ENCODE measurements at regions of chr6 and their contacts with region 1.

Region 1: DNA sequence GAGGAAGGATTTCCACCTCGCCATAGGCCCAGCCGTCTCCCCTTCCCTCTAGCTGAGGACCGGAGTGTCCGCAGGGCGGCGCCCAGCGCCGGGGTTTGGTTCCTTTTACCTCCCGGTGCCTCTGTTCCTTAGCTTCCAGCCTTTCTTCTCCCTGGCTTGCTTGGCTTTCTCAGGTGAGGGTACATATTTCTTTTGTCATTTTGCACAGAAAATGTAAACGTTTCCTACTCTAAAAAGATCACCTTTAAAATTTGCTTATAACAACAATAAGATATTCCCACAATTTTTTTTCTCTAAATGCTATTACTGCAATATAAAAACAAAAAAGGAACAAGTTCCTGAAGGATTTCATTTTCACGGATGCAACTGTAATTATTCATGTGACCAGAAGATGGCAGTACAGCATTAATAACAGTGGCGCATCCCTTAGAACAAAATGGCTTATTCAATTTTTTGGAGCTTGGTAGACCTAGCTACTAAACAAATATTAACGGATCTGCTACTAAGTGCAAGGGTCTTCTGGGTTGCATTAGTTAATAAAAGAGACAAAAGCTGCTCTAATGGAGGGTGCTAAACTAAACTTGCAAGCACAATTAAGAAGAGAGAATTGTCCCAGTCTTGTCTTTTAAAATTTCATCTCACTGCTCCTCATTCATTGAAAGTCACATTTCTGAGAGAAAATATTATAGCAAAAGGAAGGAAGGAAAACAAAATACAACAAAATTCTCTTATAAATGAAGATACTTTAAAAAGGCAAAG is 172.9 kb downstream of the ADGRG6 start:
- DNase-seq: peak; percentile 52 to 60 (median 58)
- ATAC-seq: peak; percentile 89
- H3K4me3 ChIP-seq: no peak overlapping the region
- H3K27ac ChIP-seq: no peak overlapping the region
- H3K4me1 ChIP-seq: no peaks in the 10 kb centered on the region
- H3K27me3 ChIP-seq: no peaks in the 10 kb centered on the region
- CTCF ChIP-seq: peak; percentile 61 to 85 (median 64); a peak in 5 of 6 replicates
- EP300 ChIP-seq: no peak
- POLR2A ChIP-seq: no peak
- RAD21 ChIP-seq: peak; percentile 88 to 91

Region 2: GRCh38 chr6:142146828-142147662 is 327.7 kb before region 1 on chr6 and contains the starts of genes NMBR and VTA1:
- CTCF ChIA-PET with region 1: interaction called, 3 read pairs
- POLR2A ChIA-PET with region 1: no interaction called
- in situ Hi-C with region 1: no loop called
- intact Hi-C with region 1: loop called (anchors 5 kb)
- DNase-seq: peak; percentile 92 to 100 (median 94)
- ATAC-seq: peak; percentile 100
- H3K4me3 ChIP-seq: peak within 1 kb of the TSS; percentile 78
- H3K27ac ChIP-seq: peak within 1 kb of the TSS; percentile 71
- H3K4me1 ChIP-seq: no peaks in the 10 kb centered on the region; a peak in 1 of 5 replicates
- H3K27me3 ChIP-seq: no peaks in the 10 kb centered on the region
- CTCF ChIP-seq: peak; percentile 90 to 97 (median 96)
- EP300 ChIP-seq: peak; percentile 83
- POLR2A ChIP-seq: peak; percentile 94
- RAD21 ChIP-seq: peak; percentile 87 to 90
- polyA plus RNA-seq, gene NMBR: not detected
- polyA plus RNA-seq, gene VTA1: 163 to 182 TPM

Region 3: GRCh38 chr6:142537612-142538478 is 63.1 kb after region 1 on chr6:
- CTCF ChIA-PET with region 1: interaction called, 5 read pairs
- POLR2A ChIA-PET with region 1: no interaction called
- in situ Hi-C with region 1: no loop called
- intact Hi-C with region 1: loop called (anchors 1 kb)
- DNase-seq: peak; percentile 56 to 73 (median 65)
- ATAC-seq: peak; percentile 94
- H3K4me3 ChIP-seq: peak overlapping the region; percentile 5; the same call in 1 of the 2 replicates
- H3K27ac ChIP-seq: no peak overlapping the region
- H3K4me1 ChIP-seq: no peaks in the 10 kb centered on the region; a peak in 1 of 5 replicates
- H3K27me3 ChIP-seq: peaks cover 3 to 7% of the 10 kb centered on the region in 2 experiments; a peak in 2 of 5 replicates
- CTCF ChIP-seq: peak; percentile 82 to 93 (median 83)
- EP300 ChIP-seq: no peak
- POLR2A ChIP-seq: no peak
- RAD21 ChIP-seq: peak; percentile 66 to 79

Region 4: DNA sequence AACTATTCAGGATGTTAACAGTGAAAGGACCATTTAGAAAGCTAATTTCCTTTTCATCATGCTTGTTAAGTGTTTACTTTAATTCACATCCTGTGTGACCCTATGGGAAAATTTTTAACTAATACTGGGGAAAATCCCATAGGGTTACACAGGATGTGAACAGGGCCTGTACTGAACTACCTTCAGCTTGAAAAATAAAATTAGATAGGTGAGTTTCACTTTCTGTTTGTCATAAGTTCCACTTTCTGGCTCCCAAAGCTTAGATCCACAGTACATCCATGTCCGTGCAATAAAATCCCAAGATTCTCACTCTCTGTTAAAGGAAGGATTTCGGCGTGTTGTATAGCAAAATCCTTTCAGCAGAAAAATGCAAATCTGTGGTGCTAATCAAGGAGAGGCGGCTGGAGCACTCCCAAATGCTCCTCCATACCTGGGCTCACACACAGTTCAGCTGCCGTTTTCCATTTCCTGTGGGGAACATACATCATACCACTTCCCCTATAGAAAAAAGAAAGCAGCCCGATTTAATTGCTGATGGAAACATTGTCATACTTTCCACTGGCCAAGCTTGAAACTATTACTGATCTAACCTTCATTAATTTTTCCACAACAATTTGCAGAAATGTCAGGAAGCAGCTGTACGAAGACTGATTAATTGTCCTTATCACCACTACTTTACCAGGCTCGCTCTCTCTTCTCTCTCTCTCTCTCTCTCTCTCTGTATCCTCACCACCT is 345.1 kb after region 1 on chr6:
- CTCF ChIA-PET with region 1: no interaction called
- POLR2A ChIA-PET with region 1: no interaction called
- in situ Hi-C with region 1: no loop called
- intact Hi-C with region 1: loop called (anchors 1 kb)
- DNase-seq: no peak
- ATAC-seq: 0 out of 3 replicates have a peak, but pooled peaks have one; percentile 22
- H3K4me3 ChIP-seq: no peak overlapping the region
- H3K27ac ChIP-seq: no peak overlapping the region
- H3K4me1 ChIP-seq: no peaks in the 10 kb centered on the region
- H3K27me3 ChIP-seq: no peaks in the 10 kb centered on the region
- CTCF ChIP-seq: no peak
- EP300 ChIP-seq: no peak
- POLR2A ChIP-seq: no peak
- RAD21 ChIP-seq: no peak

Region 5: DNA sequence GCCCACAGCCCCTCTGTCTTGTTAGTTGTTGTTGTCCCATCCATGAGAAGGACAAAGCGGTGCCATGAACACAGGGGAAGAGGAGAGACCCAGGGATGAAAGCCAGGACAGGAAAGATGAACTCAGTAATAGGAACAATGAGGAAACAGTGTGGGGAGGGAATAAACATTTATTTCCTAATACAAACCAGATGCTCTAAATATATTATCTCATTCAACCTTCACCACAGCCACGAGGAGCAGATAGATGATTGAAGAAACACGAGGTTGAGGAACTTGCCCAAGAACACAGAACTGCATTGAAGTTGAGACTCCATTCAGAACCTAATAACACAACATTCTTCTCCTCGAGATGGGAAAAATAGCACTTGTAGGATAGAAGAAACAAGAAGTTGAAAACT is 532.9 kb after region 1 on chr6:
- CTCF ChIA-PET with region 1: no interaction called
- POLR2A ChIA-PET with region 1: no interaction called
- in situ Hi-C with region 1: no loop called
- intact Hi-C with region 1: loop called (anchors 10 kb)
- DNase-seq: no peak
- ATAC-seq: no peak
- H3K4me3 ChIP-seq: no peak overlapping the region
- H3K27ac ChIP-seq: no peak overlapping the region
- H3K4me1 ChIP-seq: no peaks in the 10 kb centered on the region
- H3K27me3 ChIP-seq: peaks cover 0 to 5% of the 10 kb centered on the region in 2 experiments; a peak in 1 of 5 replicates
- CTCF ChIP-seq: no peak
- EP300 ChIP-seq: no peak
- POLR2A ChIP-seq: no peak
- RAD21 ChIP-seq: no peak

Region 6: DNA sequence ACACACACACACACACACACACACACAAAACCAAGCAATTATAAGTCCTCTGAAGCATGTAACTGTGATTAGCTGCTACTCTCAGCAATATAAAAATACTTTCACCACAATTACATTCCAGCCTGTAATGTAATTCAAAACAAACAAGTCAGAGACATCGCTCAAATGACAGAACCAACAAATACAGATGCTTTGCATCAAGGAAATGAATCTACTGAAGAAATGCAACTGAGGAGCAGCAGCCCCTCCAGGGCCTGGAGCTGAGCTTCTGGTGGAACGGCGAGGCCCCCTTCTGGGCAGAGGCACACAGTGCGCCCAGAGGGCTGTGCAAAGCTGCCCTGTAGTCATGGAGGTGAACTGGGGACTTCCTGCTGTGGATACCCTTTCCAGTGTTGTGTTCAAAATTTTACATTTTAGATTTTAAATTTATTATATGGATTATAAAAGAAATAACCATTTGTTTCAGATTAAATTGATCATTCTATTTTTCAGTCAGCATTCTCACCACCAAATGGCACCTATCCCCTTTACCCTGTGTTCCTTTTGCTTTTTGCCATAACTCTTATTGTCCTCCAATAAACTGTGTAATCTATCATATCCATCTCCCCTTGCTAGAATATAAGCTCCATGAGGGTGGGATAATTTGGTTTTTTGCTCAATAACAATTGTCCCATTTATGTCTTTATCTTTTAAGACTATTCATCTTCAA is 952.6 kb after region 1 on chr6:
- CTCF ChIA-PET with region 1: interaction called, 10 read pairs
- POLR2A ChIA-PET with region 1: no interaction called
- in situ Hi-C with region 1: loop called (anchors 10 kb)
- intact Hi-C with region 1: loop called (anchors 10 kb)
- DNase-seq: peak; percentile 67 to 80 (median 78)
- ATAC-seq: peak; percentile 100
- H3K4me3 ChIP-seq: no peak overlapping the region
- H3K27ac ChIP-seq: no peak overlapping the region
- H3K4me1 ChIP-seq: no peaks in the 10 kb centered on the region
- H3K27me3 ChIP-seq: no peaks in the 10 kb centered on the region
- CTCF ChIP-seq: peak; percentile 86 to 98 (median 94)
- EP300 ChIP-seq: no peak
- POLR2A ChIP-seq: peak; percentile 46
- RAD21 ChIP-seq: peak; percentile 93 to 97

Measured in K562 (cell line).